ENCODE measurements at regions of chr12 and their contacts with region 1.

Region 1: DNA sequence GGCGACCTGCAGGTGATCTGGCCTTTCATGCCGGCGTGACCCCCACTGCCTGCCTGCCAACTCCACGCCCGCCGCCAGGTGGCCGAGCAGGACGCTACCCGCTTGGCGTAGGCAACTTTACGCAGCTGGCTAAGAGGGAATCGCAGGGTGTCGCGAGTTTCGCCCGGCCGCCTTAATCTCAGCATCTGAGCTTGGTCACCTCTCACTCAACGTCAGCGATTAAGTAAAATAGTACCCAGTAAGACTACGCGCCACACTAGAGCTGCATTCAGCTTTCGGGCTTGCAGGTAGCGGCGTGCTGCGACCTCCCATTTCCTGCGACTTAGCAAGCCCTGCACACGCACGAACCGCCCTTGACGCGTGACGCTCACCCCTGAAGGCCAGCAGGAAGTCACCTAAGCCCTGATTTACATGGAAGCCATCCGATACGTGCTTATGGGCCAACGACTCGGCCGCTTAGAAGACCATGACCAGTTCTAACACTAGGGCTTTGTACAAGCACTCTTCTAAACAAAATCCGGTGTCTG is 33.2 kb downstream of the WBP11 start:
- DNase-seq: peak; percentile 91
- ATAC-seq: peak; percentile 52
- H3K4me3 Mint-ChIP-seq: peak overlapping the region; percentile 99
- H3K27ac Mint-ChIP-seq: peak overlapping the region; percentile 99
- H3K4me1 Mint-ChIP-seq: peaks cover 48% of the 10 kb centered on the region
- H3K27me3 Mint-ChIP-seq: no peaks in the 10 kb centered on the region

Region 2: DNA sequence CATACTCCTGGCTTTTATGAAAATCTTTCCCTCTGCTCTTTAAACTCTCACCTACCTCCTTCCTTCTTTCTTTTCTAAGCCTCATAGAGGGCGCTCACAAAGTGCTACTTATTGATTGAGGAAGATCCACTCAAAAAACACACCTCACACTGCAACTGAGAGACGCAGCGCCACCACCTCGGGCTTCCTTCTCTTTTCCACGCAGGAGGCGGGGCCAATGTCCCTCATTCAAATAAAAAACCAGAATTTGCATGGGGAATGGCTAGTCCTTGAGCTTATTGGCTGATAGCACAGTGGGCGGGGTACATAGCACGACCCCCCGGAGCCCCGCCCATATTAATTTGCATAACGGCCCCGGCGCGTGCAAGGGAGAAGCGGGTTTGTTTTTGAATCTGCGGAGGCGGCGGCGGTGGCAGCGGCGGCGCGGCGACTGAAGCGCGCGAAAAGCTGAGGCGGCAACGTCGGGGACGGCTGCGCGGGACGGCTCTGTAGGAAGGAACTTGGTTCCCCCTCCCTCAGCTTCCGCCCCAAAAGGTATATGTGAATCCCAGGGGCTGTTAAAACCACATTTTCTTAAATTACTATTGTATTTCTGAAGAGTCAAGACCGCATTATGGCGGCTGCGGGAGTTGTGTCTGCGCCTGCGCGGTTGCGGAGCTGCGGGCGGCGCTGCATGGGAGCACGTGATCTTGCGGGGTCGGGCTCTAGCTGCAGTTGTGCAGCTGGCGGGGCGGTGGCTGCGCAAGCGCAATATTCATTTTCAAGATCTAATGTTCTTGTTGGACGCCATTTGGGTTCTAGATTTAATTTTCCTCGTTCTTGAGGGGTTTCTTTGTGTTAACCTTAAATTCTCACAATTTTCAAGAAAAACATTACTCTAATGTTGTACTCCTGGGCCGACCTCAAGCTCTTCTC is 404.5 kb before region 1 on chr12 and contains the start of gene ATF7IP:
- CTCF ChIA-PET with region 1: interaction called, 5 read pairs
- POLR2A ChIA-PET with region 1: interaction called, 22 read pairs
- DNase-seq: peak; percentile 98
- ATAC-seq: peak; percentile 89
- H3K4me3 Mint-ChIP-seq: peak within 1 kb of the TSS; percentile 82
- H3K27ac Mint-ChIP-seq: peak within 1 kb of the TSS; percentile 96
- H3K4me1 Mint-ChIP-seq: peaks cover 28% of the 10 kb centered on the region
- H3K27me3 Mint-ChIP-seq: no peaks in the 10 kb centered on the region
- total RNA-seq, gene ATF7IP: 99.8 to 104 TPM

Region 3: GRCh38 chr12:14394317-14395073 is 375.5 kb before region 1 on chr12:
- CTCF ChIA-PET with region 1: no interaction called
- POLR2A ChIA-PET with region 1: interaction called, 14 read pairs
- DNase-seq: peak; percentile 67
- ATAC-seq: peak; percentile 78
- H3K4me3 Mint-ChIP-seq: peak overlapping the region; percentile 83
- H3K27ac Mint-ChIP-seq: peak overlapping the region; percentile 92
- H3K4me1 Mint-ChIP-seq: peaks cover 79% of the 10 kb centered on the region
- H3K27me3 Mint-ChIP-seq: no peaks in the 10 kb centered on the region

Region 4: GRCh38 chr12:14782756-14783155 is 12.7 kb after region 1 on chr12:
- CTCF ChIA-PET with region 1: interaction called, 15 read pairs
- POLR2A ChIA-PET with region 1: interaction called, 37 read pairs
- DNase-seq: no peak
- ATAC-seq: no peak
- H3K4me3 Mint-ChIP-seq: no peak overlapping the region
- H3K27ac Mint-ChIP-seq: no peak overlapping the region
- H3K4me1 Mint-ChIP-seq: peaks cover 13% of the 10 kb centered on the region
- H3K27me3 Mint-ChIP-seq: no peaks in the 10 kb centered on the region

Region 5: DNA sequence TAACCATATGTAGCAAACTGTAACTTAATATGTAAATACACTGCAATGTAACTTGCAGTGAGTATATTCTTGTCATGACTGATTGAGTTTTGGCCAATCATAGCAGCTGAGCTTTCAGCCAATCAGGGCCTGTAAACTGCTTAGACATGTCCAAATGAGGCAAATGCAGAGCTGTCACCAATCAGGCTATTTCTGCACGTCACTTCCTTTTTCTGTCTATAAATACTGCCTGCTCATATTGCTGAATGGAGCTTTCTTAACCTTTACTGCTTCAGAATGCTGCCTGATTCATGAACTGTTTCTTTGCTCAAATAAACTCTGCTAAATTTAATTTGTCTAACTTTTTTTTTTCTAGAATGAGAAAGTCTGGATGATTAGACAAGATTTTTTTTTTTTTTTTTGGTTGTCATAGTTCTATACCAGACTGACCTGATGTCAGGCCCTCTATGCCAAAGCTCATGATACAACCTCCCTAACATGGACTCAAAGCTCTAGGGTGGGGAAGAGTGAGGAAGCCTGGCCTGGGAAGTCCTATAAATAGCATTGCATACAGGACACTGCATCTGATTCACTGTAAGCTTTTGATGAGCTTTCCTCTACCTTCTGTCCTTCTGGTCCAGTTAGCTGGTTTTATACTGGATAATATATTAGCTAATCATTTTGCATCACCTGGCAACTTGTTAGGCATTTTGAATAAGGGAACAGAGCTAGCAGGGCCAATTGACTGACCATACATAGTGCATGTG is 103.6 kb after region 1 on chr12:
- CTCF ChIA-PET with region 1: no interaction called
- POLR2A ChIA-PET with region 1: no interaction called
- DNase-seq: no peak
- ATAC-seq: no peak
- H3K4me3 Mint-ChIP-seq: no peak overlapping the region
- H3K27ac Mint-ChIP-seq: no peak overlapping the region
- H3K4me1 Mint-ChIP-seq: no peaks in the 10 kb centered on the region
- H3K27me3 Mint-ChIP-seq: no peaks in the 10 kb centered on the region

Region 6: GRCh38 chr12:14948672-14949071 is 178.6 kb after region 1 on chr12:
- CTCF ChIA-PET with region 1: interaction called, 5 read pairs
- POLR2A ChIA-PET with region 1: interaction called, 18 read pairs
- DNase-seq: peak; percentile 81
- ATAC-seq: peak; percentile 79
- H3K4me3 Mint-ChIP-seq: peak overlapping the region; percentile 76
- H3K27ac Mint-ChIP-seq: peak overlapping the region; percentile 93
- H3K4me1 Mint-ChIP-seq: peaks cover 83% of the 10 kb centered on the region
- H3K27me3 Mint-ChIP-seq: no peaks in the 10 kb centered on the region

Measured in activated CD8-positive, alpha-beta T cell treated with anti-CD3 and anti-CD28 coated beads, Interleukin-2, amount 10 ng/mL, durations not matched to agents 7 days and 5 days (primary cell).